ENCODE measurements at regions of chr5 and their contacts with region 1.

Region 1: GRCh38 chr5:145834917-145835847 is at the start of gene PRELID2:
- DNase-seq: peak; percentile 96 to 97
- H3K4me3 ChIP-seq: peak within 1 kb of the TSS; percentile 82
- H3K4me3 Mint-ChIP-seq: peak within 1 kb of the TSS; percentile 72
- H3K27ac Mint-ChIP-seq: peak within 1 kb of the TSS; percentile 79
- H3K4me1 ChIP-seq: peaks cover 19% of the 10 kb centered on the region
- H3K4me1 Mint-ChIP-seq: peaks cover 23% of the 10 kb centered on the region
- H3K27me3 ChIP-seq: no peaks in the 10 kb centered on the region
- H3K27me3 Mint-ChIP-seq: no peaks in the 10 kb centered on the region
- CTCF ChIP-seq: peak; percentile 23 to 24
- total RNA-seq, gene PRELID2: 26.0 and 28.7 TPM in 2 replicates

Region 2: GRCh38 chr5:145775893-145776444 is 59.2 kb before region 1 on chr5:
- CTCF ChIA-PET with region 1: no interaction called
- POLR2A ChIA-PET with region 1: no interaction called
- intact Hi-C with region 1: no loop called
- DNase-seq: no peak
- H3K4me3 ChIP-seq: no peak overlapping the region
- H3K4me3 Mint-ChIP-seq: no peak overlapping the region
- H3K27ac Mint-ChIP-seq: no peak overlapping the region
- H3K4me1 ChIP-seq: no peaks in the 10 kb centered on the region
- H3K4me1 Mint-ChIP-seq: peaks cover 6% of the 10 kb centered on the region
- H3K27me3 ChIP-seq: no peaks in the 10 kb centered on the region
- H3K27me3 Mint-ChIP-seq: no peaks in the 10 kb centered on the region
- CTCF ChIP-seq: no peak

Region 3: GRCh38 chr5:145787001-145787400 is 48.2 kb before region 1 on chr5:
- CTCF ChIA-PET with region 1: no interaction called
- POLR2A ChIA-PET with region 1: no interaction called
- intact Hi-C with region 1: no loop called
- DNase-seq: no peak
- H3K4me3 ChIP-seq: no peak overlapping the region
- H3K4me3 Mint-ChIP-seq: no peak overlapping the region
- H3K27ac Mint-ChIP-seq: no peak overlapping the region
- H3K4me1 ChIP-seq: peaks cover 19% of the 10 kb centered on the region
- H3K4me1 Mint-ChIP-seq: peaks cover 18% of the 10 kb centered on the region
- H3K27me3 ChIP-seq: no peaks in the 10 kb centered on the region
- H3K27me3 Mint-ChIP-seq: no peaks in the 10 kb centered on the region
- CTCF ChIP-seq: no peak

Region 4: GRCh38 chr5:145854651-145855258 is 19.6 kb after region 1 on chr5:
- CTCF ChIA-PET with region 1: interaction called, 6 read pairs
- POLR2A ChIA-PET with region 1: interaction called, 3 read pairs
- intact Hi-C with region 1: loop called (anchors 1 kb)
- DNase-seq: peak; percentile 69 to 86
- H3K4me3 ChIP-seq: no peak overlapping the region
- H3K4me3 Mint-ChIP-seq: peak overlapping the region; percentile 23
- H3K27ac Mint-ChIP-seq: peak overlapping the region; percentile 62
- H3K4me1 ChIP-seq: peaks cover 39% of the 10 kb centered on the region
- H3K4me1 Mint-ChIP-seq: peaks cover 36% of the 10 kb centered on the region
- H3K27me3 ChIP-seq: no peaks in the 10 kb centered on the region
- H3K27me3 Mint-ChIP-seq: no peaks in the 10 kb centered on the region
- CTCF ChIP-seq: no peak

Region 5: DNA sequence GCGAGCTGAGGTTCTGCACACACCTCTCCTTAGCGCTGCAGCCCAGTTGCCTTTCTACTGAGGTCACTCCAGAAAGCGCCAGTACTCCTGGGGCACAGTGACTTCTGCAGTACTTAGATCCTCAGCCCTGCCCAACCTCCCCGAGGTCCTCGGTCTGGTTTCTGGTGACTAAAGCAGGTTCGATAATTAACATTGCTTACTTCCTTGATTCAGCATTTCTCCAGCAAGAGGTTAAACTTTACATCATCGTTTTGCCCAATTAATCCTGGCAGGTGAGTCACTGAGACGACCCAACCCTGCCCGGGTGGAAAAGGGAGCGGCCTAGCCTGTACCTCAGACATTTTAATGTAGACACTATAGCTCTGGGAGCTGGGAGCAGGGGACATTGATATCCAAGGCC is 192.6 kb after region 1 on chr5:
- CTCF ChIA-PET with region 1: interaction called, 3 read pairs
- POLR2A ChIA-PET with region 1: interaction called, 4 read pairs
- intact Hi-C with region 1: loop called (anchors 5 kb)
- DNase-seq: peak in 1 of 2 experiments; percentile 28
- H3K4me3 ChIP-seq: no peak overlapping the region
- H3K4me3 Mint-ChIP-seq: no peak overlapping the region
- H3K27ac Mint-ChIP-seq: peak overlapping the region; percentile 66
- H3K4me1 ChIP-seq: peaks cover 68% of the 10 kb centered on the region
- H3K4me1 Mint-ChIP-seq: peaks cover 59% of the 10 kb centered on the region
- H3K27me3 ChIP-seq: no peaks in the 10 kb centered on the region
- H3K27me3 Mint-ChIP-seq: no peaks in the 10 kb centered on the region
- CTCF ChIP-seq: no peak

Measured in Caco-2 (cell line).